ENCODE measurements at regions of chr9 and their contacts with region 1.

Region 1: DNA sequence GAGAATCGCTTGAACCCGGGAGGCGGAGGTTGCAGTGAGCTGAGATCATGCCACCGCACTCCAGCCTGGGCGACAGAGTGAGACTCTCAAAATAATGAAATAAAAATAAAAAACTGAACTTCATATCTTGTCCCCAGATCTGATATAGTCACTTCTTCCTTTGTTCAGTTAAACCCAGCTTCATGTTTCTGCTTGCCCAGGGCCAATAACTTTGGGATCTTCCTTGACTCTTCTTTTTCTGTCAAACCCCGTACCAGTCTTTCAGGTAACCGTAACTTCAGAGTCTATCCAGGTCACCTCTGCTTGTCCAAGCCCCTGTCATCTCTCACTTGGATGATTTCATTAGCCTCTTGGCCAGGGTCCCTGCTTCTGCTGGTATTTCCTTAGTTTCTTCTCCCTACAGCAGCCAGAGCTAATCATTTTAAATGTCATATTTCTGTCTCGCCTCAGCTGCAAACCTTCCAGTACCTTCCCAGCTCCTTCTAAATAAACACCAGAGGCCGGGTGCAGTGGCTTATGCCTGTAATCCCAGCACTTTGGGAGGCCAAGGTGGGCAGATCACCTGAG is 19.7 kb upstream of the ABL1 start:
- DNase-seq: no peak
- H3K4me3 Mint-ChIP-seq: no peak overlapping the region
- H3K27ac Mint-ChIP-seq: no peak overlapping the region
- H3K4me1 Mint-ChIP-seq: no peaks in the 10 kb centered on the region
- H3K27me3 Mint-ChIP-seq: peaks cover 3% of the 10 kb centered on the region

Region 2: GRCh38 chr9:130794923-130795495 is 20.3 kb before region 1 on chr9:
- intact Hi-C with region 1: no loop called
- DNase-seq: no peak
- H3K4me3 Mint-ChIP-seq: no peak overlapping the region
- H3K27ac Mint-ChIP-seq: no peak overlapping the region
- H3K4me1 Mint-ChIP-seq: no peaks in the 10 kb centered on the region
- H3K27me3 Mint-ChIP-seq: peaks cover 2% of the 10 kb centered on the region

Region 3: GRCh38 chr9:130834371-130835311 is 19.3 kb after region 1 on chr9 and contains the start of gene ABL1:
- intact Hi-C with region 1: loop called (anchors 2 kb)
- DNase-seq: peak; percentile 29
- H3K4me3 Mint-ChIP-seq: peak within 1 kb of the TSS; percentile 98
- H3K27ac Mint-ChIP-seq: peak within 1 kb of the TSS; percentile 96
- H3K4me1 Mint-ChIP-seq: peaks cover 29% of the 10 kb centered on the region
- H3K27me3 Mint-ChIP-seq: peaks cover 23% of the 10 kb centered on the region
- total RNA-seq, gene ABL1: 34.2 and 36.2 TPM in 2 replicates

Measured in activated T-helper 1 cell treated with anti-CD3 and anti-CD28 coated beads, Interleukin-12 subunit alpha, Interleukin-12 subunit beta, Interleukin-2, Interleukin-4 antibody, amounts not matched to agents 30 ng/mL and 10 ng/mL and 1 ng/mL, durations not matched to agents 14 hours and 24 hours and 36 hours (primary cell).